ENCODE measurements at regions of chr1 and their contacts with region 1.

Region 1: GRCh38 chr1:230327892-230328284 is 98.2 kb downstream of the PGBD5 start:
- DNase-seq: peak; percentile 95
- H3K4me3 Mint-ChIP-seq: peak overlapping the region; percentile 50
- H3K27ac Mint-ChIP-seq: peak overlapping the region; percentile 55
- H3K4me1 Mint-ChIP-seq: peaks cover 23% of the 10 kb centered on the region
- H3K27me3 Mint-ChIP-seq: no peaks in the 10 kb centered on the region
- CTCF ChIP-seq: no peak

Region 2: GRCh38 chr1:229887043-229887822 is 440.7 kb before region 1 on chr1:
- CTCF ChIA-PET with region 1: no interaction called
- POLR2A ChIA-PET with region 1: no interaction called
- intact Hi-C with region 1: no loop called
- DNase-seq: peak; percentile 97
- H3K4me3 Mint-ChIP-seq: no peak overlapping the region
- H3K27ac Mint-ChIP-seq: peak overlapping the region; percentile 71
- H3K4me1 Mint-ChIP-seq: peaks cover 30% of the 10 kb centered on the region
- H3K27me3 Mint-ChIP-seq: peaks cover 8% of the 10 kb centered on the region
- CTCF ChIP-seq: no peak

Region 3: DNA sequence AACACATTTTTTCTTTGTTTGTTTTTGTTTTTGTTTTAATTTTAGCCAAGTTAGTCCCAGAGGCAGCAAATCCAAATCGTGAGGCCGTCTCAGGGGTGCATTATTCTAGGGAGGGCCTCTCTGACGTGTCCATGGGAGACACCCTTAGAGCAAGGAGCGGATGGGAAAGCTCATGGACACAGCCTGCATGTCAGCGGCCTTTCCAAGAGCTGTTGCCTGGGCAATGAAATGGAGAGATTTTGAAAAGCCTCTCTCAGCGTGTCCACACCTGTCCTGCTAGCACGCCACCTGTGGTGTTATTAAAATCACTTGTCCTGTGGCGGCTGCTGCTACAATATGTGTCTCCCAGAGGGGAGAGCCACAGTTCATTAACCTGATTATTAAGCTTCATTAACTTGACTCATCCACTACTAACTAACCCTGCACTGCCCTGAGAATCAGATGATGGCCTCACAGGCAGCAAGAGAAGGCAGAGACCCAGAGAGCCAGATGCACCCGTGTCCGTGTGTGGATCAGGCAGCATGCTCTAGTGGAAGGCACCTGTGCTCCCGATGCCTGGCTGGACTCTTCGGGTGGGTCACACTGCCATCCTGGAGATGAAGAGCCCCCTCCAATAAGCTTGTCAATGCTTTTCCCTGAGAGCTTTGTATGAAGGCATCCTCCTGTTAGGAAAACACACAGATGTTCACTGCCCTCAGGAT is 35.0 kb before region 1 on chr1:
- CTCF ChIA-PET with region 1: no interaction called
- POLR2A ChIA-PET with region 1: no interaction called
- intact Hi-C with region 1: no loop called
- DNase-seq: peak; percentile 34
- H3K4me3 Mint-ChIP-seq: no peak overlapping the region
- H3K27ac Mint-ChIP-seq: no peak overlapping the region
- H3K4me1 Mint-ChIP-seq: no peaks in the 10 kb centered on the region
- H3K27me3 Mint-ChIP-seq: peaks cover 53% of the 10 kb centered on the region
- CTCF ChIP-seq: no peak

Region 4: DNA sequence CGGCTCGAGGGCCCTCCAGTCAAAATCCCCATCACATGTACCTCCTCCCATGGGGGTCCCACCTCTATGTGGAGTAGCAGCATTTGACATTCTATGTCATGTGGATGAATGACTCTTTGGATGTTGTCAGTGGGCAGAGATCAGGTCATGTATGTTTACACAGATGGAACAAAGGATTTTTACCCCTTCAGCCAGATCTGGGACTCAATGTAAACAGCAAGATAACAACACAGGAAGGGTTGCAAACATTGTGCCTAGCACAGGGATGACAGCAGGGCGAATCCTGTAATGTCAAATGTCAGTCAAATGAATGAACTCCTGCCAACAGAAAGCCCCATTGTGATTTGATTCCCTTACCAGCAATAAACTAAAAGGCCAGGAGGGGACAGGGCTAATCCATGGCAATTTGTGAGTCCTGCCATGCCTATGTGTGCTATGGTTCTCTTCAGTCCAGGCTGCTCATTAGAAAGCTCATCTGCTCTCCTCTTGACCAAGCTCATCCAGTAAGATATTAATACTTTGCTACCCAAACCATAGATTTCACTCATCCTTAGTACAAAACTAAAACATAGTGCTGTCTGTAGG is 37.9 kb after region 1 on chr1:
- CTCF ChIA-PET with region 1: interaction called, 4 read pairs
- POLR2A ChIA-PET with region 1: interaction called, 3 read pairs
- intact Hi-C with region 1: loop called (anchors 5 kb)
- DNase-seq: peak; percentile 45
- H3K4me3 Mint-ChIP-seq: no peak overlapping the region
- H3K27ac Mint-ChIP-seq: no peak overlapping the region
- H3K4me1 Mint-ChIP-seq: peaks cover 26% of the 10 kb centered on the region
- H3K27me3 Mint-ChIP-seq: no peaks in the 10 kb centered on the region
- CTCF ChIP-seq: no peak

Region 5: GRCh38 chr1:230426246-230427093 is 98.6 kb after region 1 on chr1 and contains the start of gene PGBD5:
- CTCF ChIA-PET with region 1: interaction called, 3 read pairs
- POLR2A ChIA-PET with region 1: interaction called, 5 read pairs
- intact Hi-C with region 1: loop called (anchors 5 kb)
- DNase-seq: peak; percentile 88
- H3K4me3 Mint-ChIP-seq: peak within 1 kb of the TSS; percentile 63
- H3K27ac Mint-ChIP-seq: no peak within 1 kb of the TSS
- H3K4me1 Mint-ChIP-seq: peaks cover 17% of the 10 kb centered on the region
- H3K27me3 Mint-ChIP-seq: peaks cover 52% of the 10 kb centered on the region
- CTCF ChIP-seq: no peak
- total RNA-seq, gene PGBD5: 0.83 and 1.2 TPM in 2 replicates